ENCODE measurements at regions of chr11 and their contacts with region 1.

Region 1: GRCh38 chr11:94563176-94563847 is 3.9 kb upstream of the PIWIL4 start:
- DNase-seq: no peak
- ATAC-seq: peak; percentile 95

Region 2: GRCh38 chr11:94342250-94342649 is 221.1 kb before region 1 on chr11:
- intact Hi-C with region 1: no loop called
- DNase-seq: no peak
- ATAC-seq: no peak

Region 3: GRCh38 chr11:94519478-94520084 is 43.7 kb before region 1 on chr11:
- intact Hi-C with region 1: loop called (anchors 5 kb)
- DNase-seq: no peak
- ATAC-seq: peak; percentile 64